ENCODE measurements at regions of chr11 and their contacts with region 1.

Region 1: GRCh38 chr11:62860835-62861563 is 19.7 kb upstream of the SLC3A2 start:
- DNase-seq: no peak
- H3K4me3 ChIP-seq: no peak overlapping the region
- H3K27ac ChIP-seq: no peak overlapping the region
- H3K4me1 ChIP-seq: peaks cover 0 to 27% (median 5%) of the 10 kb centered on the region in 4 donors
- H3K27me3 ChIP-seq: no peaks in the 10 kb centered on the region
- CTCF ChIP-seq: no peak
- EP300 ChIP-seq: no peak
- POLR2A ChIP-seq: no peak

Region 2: DNA sequence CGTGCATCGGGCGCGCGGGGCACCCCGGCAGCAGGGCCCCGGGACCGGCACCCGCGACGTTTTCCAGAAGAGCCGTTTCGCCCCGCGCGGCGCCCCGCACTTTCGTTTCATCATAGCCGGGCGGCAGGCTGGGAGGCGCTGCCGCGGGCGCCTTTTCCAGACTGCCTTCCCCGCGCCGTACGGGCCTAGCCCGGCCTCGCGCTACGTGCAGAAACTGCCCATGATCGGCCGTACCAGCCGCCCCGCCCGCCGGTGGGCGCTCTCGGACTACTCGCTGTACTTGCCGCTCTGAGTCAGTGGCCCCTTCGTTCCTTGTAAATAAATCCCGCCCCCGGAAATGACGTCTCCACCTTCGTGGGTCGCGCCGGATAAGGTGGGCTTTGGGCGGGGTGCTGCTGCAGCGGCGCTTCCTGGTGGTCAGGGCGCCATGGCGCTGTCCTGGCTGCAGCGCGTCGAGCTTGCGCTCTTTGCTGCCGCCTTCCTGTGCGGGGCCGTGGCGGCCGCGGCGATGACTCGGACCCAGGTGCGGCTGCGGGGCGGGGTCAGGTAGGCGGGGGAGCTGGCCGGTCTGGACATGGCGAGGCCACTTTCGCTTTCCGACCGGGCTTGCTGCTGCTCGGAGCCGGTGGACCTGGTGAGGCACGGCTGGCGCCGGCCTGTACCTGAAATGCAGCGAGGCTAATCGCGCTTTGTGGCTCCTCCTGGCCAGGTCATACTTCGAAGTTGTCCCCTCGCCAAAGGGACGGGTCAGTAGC is 73.8 kb before region 1 on chr11 and contains the start of gene TMEM179B:
- in situ Hi-C with region 1: loop called in 3 of 4 experiments (anchors 5 to 10 kb)
- intact Hi-C with region 1: loop called (anchors 1 kb)
- DNase-seq: peak; percentile 99
- H3K4me3 ChIP-seq: peak within 1 kb of the TSS; percentile 71 to 100 (median 96)
- H3K27ac ChIP-seq: peak within 1 kb of the TSS; percentile 96 to 100 (median 99)
- H3K4me1 ChIP-seq: peaks cover 19 to 47% (median 37%) of the 10 kb centered on the region in 4 donors
- H3K27me3 ChIP-seq: no peaks in the 10 kb centered on the region
- CTCF ChIP-seq: peak in 4 of 5 experiments; percentile 6 to 51 (median 34)
- EP300 ChIP-seq: no peak
- POLR2A ChIP-seq: peak; percentile 99
- total RNA-seq, gene TMEM179B: 65.9 to 112 (median 89.8) TPM

Measured in transverse colon (tissue), 4 donors.